Activated CD4-positive, alpha-beta memory T cell treated with anti-CD3 and anti-CD28 coated beads for 36 hours (primary cell): ENCODE measurements at regions of chr7 and their contacts with region 1.

Region 1: DNA sequence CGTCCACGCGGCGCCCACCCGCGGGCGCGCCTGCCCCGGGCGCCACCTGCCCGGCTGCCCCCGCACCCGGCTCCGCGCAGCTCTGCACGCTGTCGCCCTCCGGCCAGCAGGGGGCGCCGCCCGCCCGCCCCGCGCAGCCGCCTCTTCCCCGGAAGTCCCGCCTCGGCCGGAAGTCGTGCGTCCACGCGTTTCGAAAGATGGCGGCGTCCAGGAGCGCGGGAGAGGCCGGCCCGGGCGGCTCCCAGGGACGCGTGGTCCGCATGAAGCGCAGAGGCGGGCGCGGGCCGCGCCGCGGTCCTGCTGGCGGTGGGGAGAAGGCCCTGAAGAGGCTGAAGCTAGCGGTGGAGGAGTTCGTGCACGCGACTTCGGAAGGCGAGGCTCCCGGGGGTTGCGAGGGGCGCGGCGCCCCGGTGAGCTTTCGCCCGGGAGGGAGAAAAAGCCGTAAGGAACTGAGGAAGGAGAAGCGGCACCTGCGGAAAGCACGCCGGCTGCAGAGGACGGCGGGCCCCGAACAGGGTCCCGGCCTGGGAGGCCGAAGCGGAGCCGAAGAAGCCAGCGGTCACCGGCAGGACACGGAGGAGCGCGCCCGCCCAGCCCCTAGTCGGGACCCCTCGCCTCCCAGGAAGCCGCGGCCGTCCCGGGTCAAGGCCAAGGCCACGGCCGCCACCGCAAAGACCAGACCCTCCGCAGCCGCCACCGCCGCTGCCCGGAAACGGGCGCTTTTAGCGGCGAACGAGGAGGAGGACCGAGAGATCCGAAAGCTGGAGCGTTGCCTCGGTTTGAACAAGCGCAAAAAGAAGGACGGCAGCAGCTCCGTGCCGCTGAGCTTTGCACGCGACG is at the start of gene NOM1:
- DNase-seq: peak; percentile 93
- H3K4me3 Mint-ChIP-seq: peak within 1 kb of the TSS; percentile 87
- H3K27ac Mint-ChIP-seq: peak within 1 kb of the TSS; percentile 10
- H3K4me1 Mint-ChIP-seq: peaks cover 27% of the 10 kb centered on the region
- H3K27me3 Mint-ChIP-seq: peaks cover 9% of the 10 kb centered on the region
- total RNA-seq, gene NOM1: 29.2 to 31.3 TPM

Region 2: GRCh38 chr7:156907656-156908055 is 42.1 kb before region 1 on chr7:
- CTCF ChIA-PET with region 1: interaction called, 6 read pairs
- POLR2A ChIA-PET with region 1: interaction called, 4 read pairs
- intact Hi-C with region 1: loop called (anchors 1 kb)
- DNase-seq: no peak
- H3K4me3 Mint-ChIP-seq: no peak overlapping the region
- H3K27ac Mint-ChIP-seq: no peak overlapping the region
- H3K4me1 Mint-ChIP-seq: peaks cover 16% of the 10 kb centered on the region
- H3K27me3 Mint-ChIP-seq: peaks cover 10% of the 10 kb centered on the region

Region 3: DNA sequence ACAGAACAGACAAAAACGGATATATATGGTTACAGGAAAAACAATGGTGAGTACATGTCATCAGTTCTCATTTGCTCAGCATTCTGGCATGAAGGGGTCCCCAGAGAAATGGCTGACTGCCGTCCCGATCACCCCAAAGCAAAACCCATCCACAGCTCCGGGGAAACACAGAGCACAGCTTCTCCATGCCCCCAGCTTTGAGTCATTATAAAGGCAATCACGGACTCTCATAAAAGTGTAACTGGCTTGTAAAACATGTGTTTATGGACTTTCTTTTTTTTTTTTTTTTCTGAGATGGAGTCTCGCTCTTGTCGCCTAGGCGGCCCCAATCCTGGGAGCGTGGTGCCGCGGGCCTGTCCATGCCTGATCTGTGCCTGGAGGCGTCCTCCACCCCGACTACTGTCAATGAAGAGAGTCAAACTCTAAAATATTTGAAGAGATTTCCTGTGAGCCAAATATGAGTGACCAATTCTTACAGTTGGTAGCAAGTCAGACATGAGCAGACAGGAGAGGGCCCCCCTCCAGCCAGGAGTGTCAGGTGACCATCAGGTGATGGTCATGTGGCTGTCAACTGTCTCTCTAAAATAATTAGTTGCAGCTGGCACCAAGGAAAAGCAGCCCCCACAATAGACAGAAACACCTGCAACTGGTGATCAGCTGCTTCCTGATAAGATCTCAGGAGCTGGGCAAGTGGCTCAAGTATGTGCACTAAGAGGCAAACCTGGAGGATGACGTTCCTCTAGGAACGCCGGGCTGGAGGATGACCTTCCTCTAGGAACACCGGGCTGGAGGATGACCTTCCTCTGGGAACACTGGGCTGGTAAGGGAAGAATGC is 22.0 kb before region 1 on chr7:
- CTCF ChIA-PET with region 1: interaction called, 17 read pairs
- POLR2A ChIA-PET with region 1: interaction called, 9 read pairs
- intact Hi-C with region 1: loop called (anchors 2 kb)
- DNase-seq: no peak
- H3K4me3 Mint-ChIP-seq: no peak overlapping the region
- H3K27ac Mint-ChIP-seq: no peak overlapping the region
- H3K4me1 Mint-ChIP-seq: peaks cover 34% of the 10 kb centered on the region
- H3K27me3 Mint-ChIP-seq: peaks cover 4% of the 10 kb centered on the region

Region 4: DNA sequence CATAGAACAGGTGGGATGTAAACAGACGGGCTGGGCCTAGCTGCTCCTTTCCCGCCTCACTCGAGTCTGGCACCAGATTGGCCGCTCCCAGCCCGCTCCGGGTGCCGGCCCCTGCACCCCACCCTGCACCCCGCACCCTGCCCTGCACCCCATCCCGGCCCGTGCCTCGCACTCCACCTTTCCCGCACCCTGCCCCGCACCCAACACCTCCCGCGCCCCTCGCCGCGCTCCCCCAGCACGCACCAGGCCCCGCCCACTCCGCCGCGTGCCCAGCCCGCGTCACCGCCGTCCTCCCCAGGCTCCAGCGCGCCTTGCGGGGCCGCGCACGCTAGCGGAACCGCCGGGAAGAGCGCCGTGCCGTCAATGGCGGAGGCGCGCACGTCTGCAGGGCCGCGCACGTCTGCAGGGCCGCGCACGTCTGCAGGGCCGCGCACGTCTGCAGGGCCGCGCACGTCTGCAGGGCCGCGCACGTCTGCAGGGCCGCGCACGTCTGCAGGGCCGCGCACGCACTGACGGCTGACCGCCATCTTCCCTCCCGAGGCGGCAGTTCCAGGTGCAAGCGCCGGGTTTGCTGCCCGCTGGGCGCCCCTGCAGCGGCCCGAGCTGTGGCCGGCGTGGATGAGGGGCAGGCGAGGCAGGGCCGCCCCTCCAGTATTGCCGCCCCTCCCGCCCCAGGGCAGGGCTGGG is 188.8 kb after region 1 on chr7 and contains the start of gene UBE3C:
- CTCF ChIA-PET with region 1: interaction called, 5 read pairs
- POLR2A ChIA-PET with region 1: no interaction called
- intact Hi-C with region 1: loop called (anchors 5 kb)
- DNase-seq: peak; percentile 91
- H3K4me3 Mint-ChIP-seq: peak within 1 kb of the TSS; percentile 79
- H3K27ac Mint-ChIP-seq: peak within 1 kb of the TSS; percentile 91
- H3K4me1 Mint-ChIP-seq: peaks cover 37% of the 10 kb centered on the region
- H3K27me3 Mint-ChIP-seq: no peaks in the 10 kb centered on the region
- total RNA-seq, gene UBE3C: 59.8 to 59.9 TPM

Region 5: GRCh38 chr7:157273208-157274093 is 323.7 kb after region 1 on chr7:
- CTCF ChIA-PET with region 1: interaction called, 3 read pairs
- POLR2A ChIA-PET with region 1: no interaction called
- intact Hi-C with region 1: loop called (anchors 10 kb)
- DNase-seq: peak; percentile 75
- H3K4me3 Mint-ChIP-seq: no peak overlapping the region
- H3K27ac Mint-ChIP-seq: no peak overlapping the region
- H3K4me1 Mint-ChIP-seq: peaks cover 27% of the 10 kb centered on the region
- H3K27me3 Mint-ChIP-seq: peaks cover 3% of the 10 kb centered on the region